SK-N-SH (cell line): ENCODE measurements at regions of chr11 and their contacts with region 1.

Region 1: DNA sequence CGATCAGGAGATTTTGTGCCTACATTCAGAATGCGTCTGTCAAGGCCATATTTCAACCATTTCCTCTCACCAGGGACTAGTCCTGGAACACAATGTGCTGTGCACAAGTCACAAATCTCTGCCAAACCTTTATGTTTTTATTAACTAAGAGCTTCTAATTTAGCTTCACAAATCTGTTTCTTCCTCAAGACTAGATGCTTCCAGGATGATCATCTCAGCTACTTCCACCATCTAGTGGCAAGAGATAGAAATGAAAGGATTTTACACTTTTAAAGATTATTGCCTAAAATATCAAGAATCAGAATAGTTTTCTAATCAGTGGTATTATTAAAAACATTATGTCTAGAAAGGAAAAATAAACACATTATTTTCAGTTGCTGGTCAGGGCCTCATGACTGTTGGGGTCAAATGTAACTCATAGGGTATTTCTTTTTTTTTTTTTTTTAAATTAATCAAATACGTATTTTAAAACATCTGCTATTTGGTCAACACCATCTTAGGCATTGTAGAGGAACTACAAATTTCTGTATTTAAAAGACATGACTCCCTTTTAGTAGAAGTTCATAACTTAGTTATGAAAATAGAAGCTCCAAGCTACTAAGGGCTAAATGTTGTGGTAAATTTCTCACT is 1102.6 kb downstream of the DLG2 start:
- DNase-seq: peak; percentile 36
- H3K4me3 ChIP-seq: no peak overlapping the region
- H3K27ac ChIP-seq: no peak overlapping the region; a peak in 1 of 4 replicates
- H3K4me1 ChIP-seq: peaks cover 0 to under 1% of the 10 kb centered on the region in 2 experiments; a peak in 2 of 4 replicates
- H3K27me3 ChIP-seq: no peaks in the 10 kb centered on the region
- CTCF ChIP-seq: peak; percentile 81
- EP300 ChIP-seq: no peak
- RAD21 ChIP-seq: peak; percentile 80

Region 2: DNA sequence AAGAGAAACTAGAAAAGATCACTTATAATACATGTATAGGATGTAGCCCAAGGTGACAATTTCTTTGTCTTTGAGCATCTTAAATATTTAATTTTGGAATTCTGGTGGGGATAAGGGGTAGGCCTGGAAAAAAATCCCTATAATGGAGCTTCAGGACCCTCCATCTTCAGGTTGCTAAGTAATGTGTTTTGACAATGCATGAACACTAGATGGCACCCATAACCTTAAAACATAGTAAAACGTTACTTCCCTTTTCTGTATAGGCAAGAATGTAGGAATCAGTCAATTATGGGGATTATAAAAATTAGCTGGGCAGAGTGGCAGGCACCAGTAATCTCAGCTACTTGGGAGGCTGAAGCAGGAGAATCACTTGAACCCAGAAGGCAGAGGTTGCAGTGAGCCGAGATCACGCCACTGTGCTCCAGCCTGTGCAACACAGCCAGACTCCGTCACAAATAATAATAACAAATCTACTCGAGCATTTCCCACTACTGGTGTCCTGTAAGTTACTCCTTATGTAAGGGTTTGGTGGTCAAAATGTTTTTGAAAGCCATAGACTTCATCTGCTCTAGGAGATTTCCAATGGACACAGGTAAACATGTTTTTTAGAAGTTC is 696.5 kb before region 1 on chr11:
- CTCF ChIA-PET with region 1: interaction called, 22 read pairs
- POLR2A ChIA-PET with region 1: no interaction called
- DNase-seq: peak; percentile 30
- H3K4me3 ChIP-seq: peak overlapping the region in 1 of 2 experiments; percentile 33; a peak in 1 of 4 replicates
- H3K27ac ChIP-seq: peak overlapping the region in 1 of 2 experiments; percentile 75; a peak in 2 of 4 replicates
- H3K4me1 ChIP-seq: peaks cover 0 to 32% of the 10 kb centered on the region in 2 experiments; a peak in 1 of 4 replicates
- H3K27me3 ChIP-seq: no peaks in the 10 kb centered on the region
- CTCF ChIP-seq: peak; percentile 77
- EP300 ChIP-seq: no peak
- RAD21 ChIP-seq: peak; percentile 78

Region 3: DNA sequence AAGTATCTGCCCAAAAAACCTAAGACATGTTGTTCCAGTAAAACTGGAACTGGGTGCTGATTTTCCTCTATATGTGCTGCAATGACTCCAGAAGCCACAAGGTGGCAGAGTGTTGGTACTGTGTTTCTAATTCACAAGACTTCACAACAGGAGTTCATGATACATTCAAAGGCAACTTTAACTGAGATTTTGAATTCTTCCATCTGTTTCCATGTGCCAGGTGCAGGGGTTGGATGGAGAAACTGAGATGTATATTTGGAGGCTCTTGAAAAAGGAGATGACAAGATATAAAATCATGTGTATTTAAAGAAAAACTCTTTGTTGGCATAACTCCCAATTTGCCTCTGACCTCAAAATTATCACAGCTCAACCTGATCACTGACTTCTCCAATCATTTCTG is 139.8 kb before region 1 on chr11:
- CTCF ChIA-PET with region 1: interaction called, 46 read pairs
- POLR2A ChIA-PET with region 1: no interaction called
- DNase-seq: peak; percentile 25
- H3K4me3 ChIP-seq: no peak overlapping the region; a peak in 1 of 4 replicates
- H3K27ac ChIP-seq: no peak overlapping the region
- H3K4me1 ChIP-seq: peaks cover 0 to 3% of the 10 kb centered on the region in 2 experiments; a peak in 2 of 4 replicates
- H3K27me3 ChIP-seq: no peaks in the 10 kb centered on the region
- CTCF ChIP-seq: peak; percentile 85
- EP300 ChIP-seq: no peak
- RAD21 ChIP-seq: peak; percentile 70

Region 4: DNA sequence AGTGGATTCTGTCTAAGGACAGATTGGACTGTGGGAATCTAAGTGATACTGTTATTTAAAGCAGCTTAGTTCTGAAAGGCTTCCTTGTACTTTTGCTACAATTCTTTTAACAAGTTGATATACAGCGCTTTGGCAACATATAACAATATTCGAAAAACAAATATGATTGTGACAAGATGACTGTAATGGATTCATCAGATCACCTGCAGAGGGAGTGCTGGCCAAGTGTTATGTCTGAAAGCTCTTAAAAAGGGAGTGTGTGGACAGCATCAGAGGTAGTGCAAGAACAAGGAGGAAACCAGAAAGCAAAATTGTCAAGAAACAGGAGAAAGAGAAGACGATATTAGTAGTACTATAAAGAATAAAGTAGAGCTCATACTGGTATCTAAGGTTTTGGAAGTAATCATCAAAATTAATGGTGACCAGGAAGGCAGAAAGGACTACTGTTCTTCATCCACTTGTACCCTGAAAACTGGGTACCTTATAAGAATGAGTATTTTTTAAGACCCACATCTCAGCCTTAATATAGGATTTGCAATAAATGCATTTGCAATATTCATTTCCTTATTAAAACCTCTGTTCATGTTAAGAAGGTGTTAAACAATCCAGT is 126.4 kb before region 1 on chr11:
- CTCF ChIA-PET with region 1: interaction called, 78 read pairs
- POLR2A ChIA-PET with region 1: no interaction called
- DNase-seq: peak; percentile 28
- H3K4me3 ChIP-seq: no peak overlapping the region
- H3K27ac ChIP-seq: no peak overlapping the region
- H3K4me1 ChIP-seq: no peaks in the 10 kb centered on the region
- H3K27me3 ChIP-seq: no peaks in the 10 kb centered on the region
- CTCF ChIP-seq: peak; percentile 70
- EP300 ChIP-seq: no peak
- RAD21 ChIP-seq: peak; percentile 80

Region 5: DNA sequence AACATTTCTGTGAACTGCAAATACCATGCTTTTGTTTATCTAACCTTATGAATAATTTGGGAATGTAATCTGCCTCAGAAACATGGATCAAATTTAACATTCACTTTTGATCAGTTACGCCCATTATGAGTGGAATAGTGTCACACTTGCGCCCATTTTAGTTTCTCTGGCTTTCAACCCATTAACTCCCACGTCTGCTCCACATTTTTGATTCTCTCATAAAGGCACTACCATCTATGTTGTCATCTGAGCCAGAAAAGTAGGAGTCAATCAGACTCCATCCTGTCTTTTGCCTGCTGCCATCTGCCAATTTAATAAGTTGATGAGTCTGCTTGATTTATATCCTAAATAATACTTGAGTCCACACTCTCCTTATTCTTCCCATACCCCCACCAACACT is 11.9 kb after region 1 on chr11:
- CTCF ChIA-PET with region 1: interaction called, 13 read pairs
- POLR2A ChIA-PET with region 1: no interaction called
- DNase-seq: no peak
- H3K4me3 ChIP-seq: no peak overlapping the region
- H3K27ac ChIP-seq: no peak overlapping the region
- H3K4me1 ChIP-seq: peaks cover 0 to under 1% of the 10 kb centered on the region in 2 experiments; a peak in 2 of 4 replicates
- H3K27me3 ChIP-seq: no peaks in the 10 kb centered on the region
- CTCF ChIP-seq: no peak
- EP300 ChIP-seq: no peak
- RAD21 ChIP-seq: no peak

Region 6: GRCh38 chr11:84558085-84558905 is 33.8 kb after region 1 on chr11:
- CTCF ChIA-PET with region 1: interaction called, 17 read pairs
- POLR2A ChIA-PET with region 1: no interaction called
- DNase-seq: peak; percentile 27
- H3K4me3 ChIP-seq: no peak overlapping the region; a peak in 1 of 4 replicates
- H3K27ac ChIP-seq: no peak overlapping the region
- H3K4me1 ChIP-seq: no peaks in the 10 kb centered on the region
- H3K27me3 ChIP-seq: no peaks in the 10 kb centered on the region
- CTCF ChIP-seq: peak; percentile 87
- EP300 ChIP-seq: no peak
- RAD21 ChIP-seq: peak; percentile 82